ENCODE measurements at regions of chr17 and their contacts with region 1.

Region 1: DNA sequence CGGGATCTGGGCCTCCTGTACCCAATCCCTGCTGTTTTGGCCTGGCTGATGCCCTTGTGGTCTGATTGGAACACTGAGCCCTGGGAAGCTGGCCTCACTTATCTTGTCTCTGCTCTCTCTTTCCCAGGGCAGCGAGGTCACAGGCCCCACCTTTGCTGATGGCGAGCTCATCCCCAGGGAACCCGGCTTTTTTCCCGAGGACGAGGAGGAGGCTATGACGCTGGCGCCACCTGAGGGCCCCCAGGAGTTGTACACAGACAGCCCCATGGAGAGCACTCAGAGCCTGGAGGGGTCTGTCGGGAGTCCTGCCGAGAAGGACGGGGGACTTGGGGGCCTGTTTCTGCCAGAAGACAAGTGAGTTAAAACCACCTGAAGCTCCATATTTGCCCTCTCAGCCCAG is 126.0 kb downstream of the RAB11FIP4 start:
- DNase-seq: peak; percentile 70 to 75
- H3K4me3 ChIP-seq: no peak overlapping the region
- H3K4me3 Mint-ChIP-seq: no peak overlapping the region
- H3K27ac Mint-ChIP-seq: no peak overlapping the region
- H3K4me1 ChIP-seq: peaks cover 17% of the 10 kb centered on the region
- H3K4me1 Mint-ChIP-seq: peaks cover 6% of the 10 kb centered on the region
- H3K27me3 ChIP-seq: no peaks in the 10 kb centered on the region
- H3K27me3 Mint-ChIP-seq: no peaks in the 10 kb centered on the region
- CTCF ChIP-seq: peak; percentile 69 to 82

Region 2: DNA sequence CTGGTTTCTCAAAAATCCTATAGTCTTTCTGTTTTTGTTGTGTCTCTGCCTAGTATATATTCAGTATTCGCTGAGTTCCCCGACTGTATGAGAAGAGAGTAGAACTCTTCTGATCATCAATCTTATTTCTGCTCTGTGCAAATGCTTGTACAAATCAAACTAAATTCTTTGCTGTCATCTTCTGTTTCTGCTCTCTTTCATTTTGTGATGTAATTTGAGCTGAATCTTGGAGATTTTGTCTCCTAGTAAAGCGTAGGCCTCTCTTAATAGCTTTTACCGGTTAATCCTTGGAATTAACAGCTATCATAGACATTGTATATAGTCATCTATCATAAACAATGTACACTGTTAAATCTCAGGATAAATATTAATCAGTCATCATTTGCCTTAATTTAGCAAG is 282.4 kb before region 1 on chr17:
- CTCF ChIA-PET with region 1: no interaction called
- POLR2A ChIA-PET with region 1: no interaction called
- intact Hi-C with region 1: no loop called
- DNase-seq: no peak
- H3K4me3 ChIP-seq: no peak overlapping the region
- H3K4me3 Mint-ChIP-seq: no peak overlapping the region
- H3K27ac Mint-ChIP-seq: no peak overlapping the region
- H3K4me1 ChIP-seq: no peaks in the 10 kb centered on the region
- H3K4me1 Mint-ChIP-seq: no peaks in the 10 kb centered on the region
- H3K27me3 ChIP-seq: no peaks in the 10 kb centered on the region
- H3K27me3 Mint-ChIP-seq: no peaks in the 10 kb centered on the region
- CTCF ChIP-seq: no peak

Region 3: GRCh38 chr17:31388770-31389661 is 128.5 kb before region 1 on chr17:
- CTCF ChIA-PET with region 1: interaction called, 12 read pairs
- POLR2A ChIA-PET with region 1: no interaction called
- intact Hi-C with region 1: no loop called
- DNase-seq: peak in 1 of 2 experiments; percentile 63
- H3K4me3 ChIP-seq: no peak overlapping the region
- H3K4me3 Mint-ChIP-seq: no peak overlapping the region
- H3K27ac Mint-ChIP-seq: no peak overlapping the region
- H3K4me1 ChIP-seq: no peaks in the 10 kb centered on the region
- H3K4me1 Mint-ChIP-seq: no peaks in the 10 kb centered on the region
- H3K27me3 ChIP-seq: peaks cover 2% of the 10 kb centered on the region
- H3K27me3 Mint-ChIP-seq: peaks cover 12% of the 10 kb centered on the region
- CTCF ChIP-seq: peak; percentile 87 to 93

Region 4: DNA sequence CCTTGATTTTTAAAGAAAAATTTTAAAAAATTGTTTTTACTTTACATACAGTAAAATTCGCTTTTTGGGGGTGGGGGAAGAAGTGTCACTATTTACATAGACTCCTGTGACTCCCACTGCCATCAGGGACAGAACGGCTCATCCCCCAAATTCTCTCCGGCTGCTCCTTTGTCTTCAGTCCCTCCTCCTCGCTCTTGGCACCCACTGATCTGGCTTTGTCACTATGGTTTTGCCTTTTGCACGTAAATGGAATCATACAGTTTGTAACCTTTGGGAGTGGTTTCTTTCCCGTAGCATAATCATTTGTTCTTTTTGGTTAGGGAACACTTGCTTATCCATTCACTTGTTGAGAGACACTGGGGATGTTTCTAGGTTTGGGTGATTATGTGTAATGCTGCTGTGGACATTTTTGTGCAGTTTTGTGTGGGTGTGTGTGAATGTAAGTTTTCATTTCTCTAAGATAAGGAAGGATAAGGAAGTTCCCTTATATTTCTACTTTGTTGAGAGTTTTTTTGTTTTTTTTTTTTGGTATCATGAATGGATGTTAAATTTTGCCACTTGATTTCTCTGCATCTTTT is 98.7 kb before region 1 on chr17:
- CTCF ChIA-PET with region 1: no interaction called
- POLR2A ChIA-PET with region 1: no interaction called
- intact Hi-C with region 1: no loop called
- DNase-seq: no peak
- H3K4me3 ChIP-seq: no peak overlapping the region
- H3K4me3 Mint-ChIP-seq: no peak overlapping the region
- H3K27ac Mint-ChIP-seq: no peak overlapping the region
- H3K4me1 ChIP-seq: no peaks in the 10 kb centered on the region
- H3K4me1 Mint-ChIP-seq: no peaks in the 10 kb centered on the region
- H3K27me3 ChIP-seq: no peaks in the 10 kb centered on the region
- H3K27me3 Mint-ChIP-seq: no peaks in the 10 kb centered on the region
- CTCF ChIP-seq: no peak

Region 5: GRCh38 chr17:31437720-31438420 is 79.7 kb before region 1 on chr17:
- CTCF ChIA-PET with region 1: interaction called, 41 read pairs
- POLR2A ChIA-PET with region 1: no interaction called
- intact Hi-C with region 1: loop called (anchors 1 kb)
- DNase-seq: no peak
- H3K4me3 ChIP-seq: no peak overlapping the region
- H3K4me3 Mint-ChIP-seq: no peak overlapping the region
- H3K27ac Mint-ChIP-seq: no peak overlapping the region
- H3K4me1 ChIP-seq: 0 out of 2 replicates have a peak, but pooled peaks cover 6% of the 10 kb centered on the region
- H3K4me1 Mint-ChIP-seq: no peaks in the 10 kb centered on the region
- H3K27me3 ChIP-seq: no peaks in the 10 kb centered on the region
- H3K27me3 Mint-ChIP-seq: no peaks in the 10 kb centered on the region
- CTCF ChIP-seq: no peak

Region 6: GRCh38 chr17:31452101-31452500 is 65.4 kb before region 1 on chr17:
- CTCF ChIA-PET with region 1: interaction called, 10 read pairs
- POLR2A ChIA-PET with region 1: no interaction called
- intact Hi-C with region 1: no loop called
- DNase-seq: no peak
- H3K4me3 ChIP-seq: no peak overlapping the region
- H3K4me3 Mint-ChIP-seq: no peak overlapping the region
- H3K27ac Mint-ChIP-seq: peak overlapping the region; percentile 60
- H3K4me1 ChIP-seq: peaks cover 58% of the 10 kb centered on the region
- H3K4me1 Mint-ChIP-seq: peaks cover 36% of the 10 kb centered on the region
- H3K27me3 ChIP-seq: no peaks in the 10 kb centered on the region
- H3K27me3 Mint-ChIP-seq: no peaks in the 10 kb centered on the region
- CTCF ChIP-seq: no peak

Region 7: GRCh38 chr17:31467502-31468256 is 49.8 kb before region 1 on chr17:
- CTCF ChIA-PET with region 1: interaction called, 10 read pairs
- POLR2A ChIA-PET with region 1: no interaction called
- intact Hi-C with region 1: no loop called
- DNase-seq: no peak
- H3K4me3 ChIP-seq: no peak overlapping the region
- H3K4me3 Mint-ChIP-seq: no peak overlapping the region
- H3K27ac Mint-ChIP-seq: no peak overlapping the region
- H3K4me1 ChIP-seq: peaks cover 4% of the 10 kb centered on the region
- H3K4me1 Mint-ChIP-seq: peaks cover 20% of the 10 kb centered on the region
- H3K27me3 ChIP-seq: no peaks in the 10 kb centered on the region
- H3K27me3 Mint-ChIP-seq: no peaks in the 10 kb centered on the region
- CTCF ChIP-seq: no peak

Region 8: DNA sequence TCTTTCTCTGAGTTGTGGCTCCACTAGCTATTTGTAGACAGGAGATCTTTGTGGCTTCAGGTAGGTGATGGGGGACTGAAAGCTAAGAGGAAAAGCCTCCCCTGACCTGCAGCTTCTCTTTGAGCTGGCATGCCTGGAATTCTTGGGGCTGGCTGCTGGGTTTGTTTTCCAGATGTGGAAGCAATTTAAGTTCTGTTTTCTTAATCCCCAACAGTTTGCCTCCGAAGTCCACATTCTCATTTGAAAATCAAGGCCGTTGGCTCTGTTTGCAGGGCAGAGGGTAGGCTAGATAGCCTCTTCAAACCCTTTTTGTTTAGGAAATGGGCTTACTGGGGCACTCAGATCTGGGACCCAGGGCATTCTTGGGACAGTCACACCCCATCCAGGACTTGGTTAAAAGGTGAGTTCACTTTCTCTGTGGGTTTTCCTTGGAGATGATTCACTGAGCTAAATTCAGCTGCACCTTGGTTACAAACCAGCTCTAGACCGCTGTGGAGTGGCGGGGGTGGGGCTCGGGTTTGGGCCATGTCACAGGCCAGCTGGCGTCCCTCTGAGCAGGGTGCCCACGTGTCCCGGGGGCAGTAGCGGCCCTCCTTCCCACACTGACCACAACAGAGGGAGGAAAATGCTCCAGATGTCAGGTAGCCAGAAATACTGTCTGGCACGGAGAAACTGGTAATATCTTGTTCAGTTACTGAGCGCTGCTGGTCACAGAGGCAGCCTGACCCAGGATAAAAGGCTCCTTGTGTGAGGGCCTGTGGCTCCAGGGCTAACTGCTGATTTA is 17.6 kb before region 1 on chr17:
- CTCF ChIA-PET with region 1: interaction called, 21 read pairs
- POLR2A ChIA-PET with region 1: no interaction called
- intact Hi-C with region 1: no loop called
- DNase-seq: peak in 1 of 2 experiments; percentile 58
- H3K4me3 ChIP-seq: no peak overlapping the region
- H3K4me3 Mint-ChIP-seq: peak overlapping the region; percentile 37
- H3K27ac Mint-ChIP-seq: peak overlapping the region; percentile 80
- H3K4me1 ChIP-seq: peaks cover 61% of the 10 kb centered on the region
- H3K4me1 Mint-ChIP-seq: peaks cover 31% of the 10 kb centered on the region
- H3K27me3 ChIP-seq: no peaks in the 10 kb centered on the region
- H3K27me3 Mint-ChIP-seq: no peaks in the 10 kb centered on the region
- CTCF ChIP-seq: no peak